Activated T-helper 2 cell treated with anti-CD3 and anti-CD28 coated beads, Interferon-gamma antibody, Interleukin-2, Interleukin-4, amounts not matched to agents 10 μg/mL and 5 μg/mL and 100 μg/mL, durations not matched to agents 14 hours and 24 hours and 36 hours (primary cell): ENCODE measurements at regions of chr3 and their contacts with region 1.

Region 1: DNA sequence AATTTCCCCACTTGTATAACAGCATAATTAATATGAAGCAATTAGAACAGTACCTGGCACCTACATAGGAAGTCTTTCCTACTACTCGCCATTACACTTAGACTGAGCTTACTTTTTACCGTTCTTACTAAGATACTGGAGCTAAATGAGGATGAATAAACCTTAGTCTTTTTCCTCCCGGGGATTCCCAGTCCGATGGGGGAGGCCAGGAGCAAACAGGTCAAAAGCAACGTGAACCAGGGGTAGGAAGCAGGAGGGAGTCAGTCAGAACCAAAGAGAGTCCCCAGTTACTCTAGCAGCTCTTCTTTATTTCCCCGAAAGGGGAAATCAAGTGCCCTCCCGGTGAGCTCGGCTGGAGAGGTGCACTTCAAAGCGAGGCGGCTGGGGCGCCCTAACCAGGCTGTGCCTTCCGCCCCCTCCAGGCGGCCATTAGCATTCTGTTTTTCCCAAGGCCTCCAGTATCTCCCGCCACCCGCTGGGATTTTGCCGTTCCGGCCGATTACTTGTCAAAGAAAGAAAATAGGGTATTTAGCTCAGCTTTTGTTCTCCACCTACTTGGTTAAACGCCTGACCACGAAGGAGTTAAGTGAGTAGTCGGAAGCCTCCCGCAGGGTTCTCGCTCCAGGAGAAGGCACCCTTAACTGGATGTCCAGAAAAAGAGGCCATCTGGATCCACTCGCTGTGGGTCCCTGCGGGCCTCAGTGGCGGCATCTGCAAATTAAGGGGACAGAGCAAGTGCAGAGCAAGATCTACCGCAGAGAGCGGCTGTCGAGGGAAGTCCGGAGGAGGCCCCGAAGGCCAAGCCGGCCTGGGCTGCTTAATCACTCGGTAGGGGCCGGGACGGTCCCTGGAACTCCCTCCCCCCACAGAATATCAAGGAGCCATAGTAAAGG is 6.3 kb upstream of the EOMES start:
- DNase-seq: no peak
- H3K4me3 Mint-ChIP-seq: peak overlapping the region; percentile 64
- H3K27ac Mint-ChIP-seq: no peak overlapping the region
- H3K4me1 Mint-ChIP-seq: peaks cover 45% of the 10 kb centered on the region
- H3K27me3 Mint-ChIP-seq: peaks cover 87% of the 10 kb centered on the region

Region 2: DNA sequence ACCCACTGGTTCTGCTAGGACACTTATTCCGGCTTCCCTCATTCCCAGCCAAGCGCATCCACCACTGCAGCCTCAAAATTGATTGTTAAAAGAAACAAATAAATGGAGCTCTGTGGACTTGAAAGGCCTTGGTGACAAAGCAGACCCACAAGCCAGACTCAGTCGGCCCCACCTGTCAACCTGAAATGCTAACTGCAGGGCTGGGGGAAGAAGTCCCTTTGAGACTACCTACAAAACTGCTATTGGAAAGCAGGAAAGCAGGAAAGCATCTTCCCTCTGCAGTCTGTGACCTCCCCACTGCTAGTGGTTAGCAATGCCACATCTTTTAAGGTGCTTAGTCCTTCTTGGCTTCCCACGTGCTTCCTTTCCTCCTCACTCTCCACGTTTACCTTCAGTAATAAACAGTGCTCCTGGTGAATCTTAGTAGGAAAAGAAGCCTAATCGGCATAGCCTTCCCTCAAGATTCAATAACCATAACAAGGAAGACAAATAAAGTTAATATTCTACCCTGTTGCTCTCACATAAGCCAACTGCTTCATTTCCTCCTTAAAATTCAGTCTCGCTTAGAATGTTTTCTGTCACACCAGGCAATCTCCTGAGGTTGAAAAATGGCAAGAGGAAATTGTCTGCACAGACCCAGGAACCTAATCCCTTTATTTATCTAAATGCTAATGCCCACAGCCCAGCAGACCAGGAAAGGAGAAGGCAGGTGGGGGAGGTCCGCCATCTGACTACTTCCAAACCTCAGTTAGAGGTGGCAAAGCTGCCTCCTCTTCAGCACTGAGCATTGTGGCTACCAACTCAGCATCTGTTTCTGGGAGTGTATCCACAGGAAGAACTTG is 655.4 kb before region 1 on chr3:
- intact Hi-C with region 1: no loop called
- DNase-seq: no peak
- H3K4me3 Mint-ChIP-seq: no peak overlapping the region
- H3K27ac Mint-ChIP-seq: no peak overlapping the region
- H3K4me1 Mint-ChIP-seq: no peaks in the 10 kb centered on the region
- H3K27me3 Mint-ChIP-seq: no peaks in the 10 kb centered on the region

Region 3: GRCh38 chr3:27590437-27591298 is 137.8 kb before region 1 on chr3:
- intact Hi-C with region 1: no loop called
- DNase-seq: no peak
- H3K4me3 Mint-ChIP-seq: peak overlapping the region; percentile 38
- H3K27ac Mint-ChIP-seq: peak overlapping the region; percentile 81
- H3K4me1 Mint-ChIP-seq: peaks cover 32% of the 10 kb centered on the region
- H3K27me3 Mint-ChIP-seq: no peaks in the 10 kb centered on the region

Region 4: GRCh38 chr3:27746838-27747237 is 18.4 kb after region 1 on chr3:
- intact Hi-C with region 1: no loop called
- DNase-seq: no peak
- H3K4me3 Mint-ChIP-seq: no peak overlapping the region
- H3K27ac Mint-ChIP-seq: no peak overlapping the region
- H3K4me1 Mint-ChIP-seq: peaks cover 16% of the 10 kb centered on the region
- H3K27me3 Mint-ChIP-seq: peaks cover 6% of the 10 kb centered on the region

Region 5: GRCh38 chr3:28575746-28576613 is 847.5 kb after region 1 on chr3:
- intact Hi-C with region 1: loop called (anchors 5 kb)
- DNase-seq: no peak
- H3K4me3 Mint-ChIP-seq: no peak overlapping the region
- H3K27ac Mint-ChIP-seq: no peak overlapping the region
- H3K4me1 Mint-ChIP-seq: peaks cover 2% of the 10 kb centered on the region
- H3K27me3 Mint-ChIP-seq: peaks cover 53% of the 10 kb centered on the region